ENCODE measurements at regions of chr6 and their contacts with region 1.

Region 1: GRCh38 chr6:97186416-97186999 is 96.5 kb downstream of the MMS22L start:
- DNase-seq: peak; percentile 65
- ATAC-seq: peak; percentile 74
- H3K4me3 ChIP-seq: no peak overlapping the region
- H3K27ac ChIP-seq: no peak overlapping the region
- H3K4me1 ChIP-seq: peaks cover 2% of the 10 kb centered on the region; the same call in 1 of the 2 replicates
- H3K27me3 ChIP-seq: no peaks in the 10 kb centered on the region
- CTCF ChIP-seq: peak; percentile 94
- POLR2A ChIP-seq: no peak
- RAD21 ChIP-seq: peak; percentile 87

Region 2: GRCh38 chr6:97215157-97215769 is 28.8 kb after region 1 on chr6:
- CTCF ChIA-PET with region 1: interaction called, 17 read pairs
- POLR2A ChIA-PET with region 1: no interaction called
- dilution Hi-C with region 1: no loop called
- in situ Hi-C with region 1: no loop called
- intact Hi-C with region 1: no loop called
- DNase-seq: peak; percentile 76
- ATAC-seq: peak; percentile 97
- H3K4me3 ChIP-seq: no peak overlapping the region
- H3K27ac ChIP-seq: no peak overlapping the region
- H3K4me1 ChIP-seq: no peaks in the 10 kb centered on the region
- H3K27me3 ChIP-seq: no peaks in the 10 kb centered on the region
- CTCF ChIP-seq: peak; percentile 72
- POLR2A ChIP-seq: no peak
- RAD21 ChIP-seq: peak; percentile 81

Region 3: GRCh38 chr6:97282726-97283617 is 96.5 kb after region 1 on chr6 and contains the start of gene MMS22L:
- CTCF ChIA-PET with region 1: no interaction called
- POLR2A ChIA-PET with region 1: no interaction called
- dilution Hi-C with region 1: no loop called
- in situ Hi-C with region 1: no loop called
- intact Hi-C with region 1: loop called (anchors 2 kb)
- DNase-seq: peak; percentile 94
- ATAC-seq: peak; percentile 99
- H3K4me3 ChIP-seq: peak within 1 kb of the TSS; percentile 64
- H3K27ac ChIP-seq: peak within 1 kb of the TSS; percentile 64
- H3K4me1 ChIP-seq: no peaks in the 10 kb centered on the region
- H3K27me3 ChIP-seq: no peaks in the 10 kb centered on the region
- CTCF ChIP-seq: no peak
- POLR2A ChIP-seq: no peak
- RAD21 ChIP-seq: no peak
- total RNA-seq, gene MMS22L: 18.6 and 30.6 TPM in 2 replicates

Region 4: GRCh38 chr6:97347111-97347510 is 160.6 kb after region 1 on chr6:
- CTCF ChIA-PET with region 1: no interaction called
- POLR2A ChIA-PET with region 1: no interaction called
- dilution Hi-C with region 1: no loop called
- in situ Hi-C with region 1: no loop called
- intact Hi-C with region 1: no loop called
- DNase-seq: no peak
- ATAC-seq: no peak
- H3K4me3 ChIP-seq: no peak overlapping the region
- H3K27ac ChIP-seq: no peak overlapping the region
- H3K4me1 ChIP-seq: no peaks in the 10 kb centered on the region
- H3K27me3 ChIP-seq: no peaks in the 10 kb centered on the region; the same call in 1 of the 2 replicates
- CTCF ChIP-seq: no peak
- POLR2A ChIP-seq: no peak
- RAD21 ChIP-seq: no peak

Region 5: DNA sequence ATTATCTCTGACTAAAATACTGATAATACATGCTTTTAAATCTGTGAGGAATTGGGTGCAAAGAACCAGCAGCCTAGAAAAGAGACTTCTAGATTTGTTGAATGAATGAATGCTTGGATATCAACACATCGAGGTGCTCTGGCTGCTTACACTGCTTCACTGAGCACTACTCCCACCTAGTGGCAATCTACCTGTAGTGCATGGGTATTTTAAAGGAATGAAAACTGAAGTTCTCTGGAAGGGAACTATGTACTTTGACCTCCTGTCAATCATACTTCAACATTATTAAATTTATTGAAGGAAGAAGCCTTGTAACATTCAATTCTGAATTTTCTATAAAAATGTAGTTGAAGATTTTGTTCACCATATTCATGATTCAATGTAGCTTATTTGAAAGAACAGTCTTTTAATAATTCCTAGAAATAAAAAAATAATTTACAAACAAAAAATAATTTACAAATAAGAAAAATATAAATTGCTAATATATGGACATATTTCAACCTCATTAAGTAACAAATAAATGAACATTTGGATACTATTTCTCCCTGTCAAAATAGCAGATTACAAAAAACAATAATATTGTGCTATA is 207.7 kb after region 1 on chr6:
- CTCF ChIA-PET with region 1: interaction called, 9 read pairs
- POLR2A ChIA-PET with region 1: no interaction called
- dilution Hi-C with region 1: no loop called
- in situ Hi-C with region 1: loop called (anchors 5 kb)
- intact Hi-C with region 1: loop called (anchors 1 kb)
- DNase-seq: peak; percentile 57
- ATAC-seq: peak; percentile 86
- H3K4me3 ChIP-seq: no peak overlapping the region
- H3K27ac ChIP-seq: no peak overlapping the region
- H3K4me1 ChIP-seq: no peaks in the 10 kb centered on the region
- H3K27me3 ChIP-seq: peaks cover 3% of the 10 kb centered on the region
- CTCF ChIP-seq: peak; percentile 91
- POLR2A ChIP-seq: no peak
- RAD21 ChIP-seq: peak; percentile 94

Region 6: DNA sequence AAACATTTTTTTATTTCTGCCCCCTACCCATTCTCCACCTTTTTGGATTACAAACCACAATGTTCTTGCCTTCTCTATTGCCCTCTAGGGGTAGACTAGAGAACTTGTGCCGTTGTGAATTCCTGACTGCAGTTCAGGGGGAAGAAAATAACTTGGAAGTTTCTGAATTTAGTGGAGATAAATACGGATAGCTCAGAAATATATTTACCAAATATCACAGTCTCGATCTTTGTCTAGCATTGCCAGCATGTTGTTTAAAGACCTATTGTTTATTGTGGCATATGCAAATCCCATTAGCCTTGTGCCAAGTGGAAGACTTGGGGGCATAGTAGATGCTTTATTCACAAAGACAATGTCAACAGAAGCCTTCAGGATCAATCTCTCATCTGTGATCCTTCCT is 250.6 kb after region 1 on chr6:
- CTCF ChIA-PET with region 1: no interaction called
- POLR2A ChIA-PET with region 1: no interaction called
- dilution Hi-C with region 1: no loop called
- in situ Hi-C with region 1: no loop called
- intact Hi-C with region 1: loop called (anchors 1 kb)
- DNase-seq: peak; percentile 18
- ATAC-seq: peak; percentile 62; the same call in 1 of the 2 replicates
- H3K4me3 ChIP-seq: no peak overlapping the region
- H3K27ac ChIP-seq: no peak overlapping the region
- H3K4me1 ChIP-seq: no peaks in the 10 kb centered on the region
- H3K27me3 ChIP-seq: no peaks in the 10 kb centered on the region
- CTCF ChIP-seq: peak; percentile 64
- POLR2A ChIP-seq: no peak
- RAD21 ChIP-seq: peak; percentile 42

Region 7: GRCh38 chr6:97497713-97498331 is 311.3 kb after region 1 on chr6:
- CTCF ChIA-PET with region 1: no interaction called
- POLR2A ChIA-PET with region 1: no interaction called
- dilution Hi-C with region 1: no loop called
- in situ Hi-C with region 1: no loop called
- intact Hi-C with region 1: loop called (anchors 5 kb)
- DNase-seq: peak; percentile 65
- ATAC-seq: peak; percentile 98
- H3K4me3 ChIP-seq: no peak overlapping the region
- H3K27ac ChIP-seq: no peak overlapping the region
- H3K4me1 ChIP-seq: no peaks in the 10 kb centered on the region
- H3K27me3 ChIP-seq: 0 out of 2 replicates have a peak, but pooled peaks cover 2% of the 10 kb centered on the region
- CTCF ChIP-seq: peak; percentile 83
- POLR2A ChIP-seq: no peak
- RAD21 ChIP-seq: peak; percentile 71

Measured in IMR-90 (cell line).